ENCODE measurements at regions of chr19 and their contacts with region 1.

Region 1: GRCh38 chr19:14277608-14278007 is 71.6 kb upstream of the ADGRL1 start:
- DNase-seq: no peak
- ATAC-seq: no peak
- H3K4me3 ChIP-seq: no peak overlapping the region
- H3K4me3 Mint-ChIP-seq: no peak overlapping the region
- H3K27ac ChIP-seq: no peak overlapping the region
- H3K27ac Mint-ChIP-seq: no peak overlapping the region
- H3K4me1 ChIP-seq: peaks cover 8% of the 10 kb centered on the region
- H3K4me1 Mint-ChIP-seq: peaks cover 15% of the 10 kb centered on the region
- H3K27me3 ChIP-seq: no peaks in the 10 kb centered on the region
- H3K27me3 Mint-ChIP-seq: no peaks in the 10 kb centered on the region
- CTCF ChIP-seq: no peak

Region 2: DNA sequence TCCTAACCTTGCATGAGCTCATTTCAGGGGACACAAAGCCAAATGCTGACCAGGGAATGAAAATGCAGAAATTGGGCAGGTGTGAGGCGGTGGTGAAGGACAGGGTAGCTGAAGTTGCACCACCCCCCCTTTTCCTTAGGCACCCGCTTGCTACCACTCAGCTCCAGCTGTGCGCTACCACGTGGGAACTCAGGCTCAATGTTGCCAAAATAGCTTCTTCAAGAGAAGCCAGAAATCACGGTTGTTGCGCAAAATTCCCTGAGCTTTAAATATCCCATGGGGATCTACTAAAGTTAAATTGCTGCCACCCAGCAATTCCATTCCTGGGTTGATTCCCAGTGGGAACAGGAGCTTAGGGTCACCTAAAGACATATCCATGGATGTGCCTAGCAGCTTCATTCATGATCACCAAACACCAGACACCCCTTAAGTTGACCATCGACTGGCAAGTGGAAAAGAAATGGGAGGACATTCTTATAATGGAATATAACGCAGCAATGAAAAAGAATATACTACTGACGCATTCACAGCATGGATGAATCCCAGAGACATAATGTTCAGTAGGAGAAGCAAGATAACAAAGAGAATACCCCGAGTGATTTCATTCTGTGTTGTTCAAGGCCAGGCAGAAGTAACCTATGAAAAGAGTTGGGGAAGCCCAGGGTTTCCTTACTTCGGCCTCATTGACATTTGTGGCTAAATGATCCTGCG is 58.8 kb before region 1 on chr19:
- CTCF ChIA-PET with region 1: no interaction called
- POLR2A ChIA-PET with region 1: no interaction called
- intact Hi-C with region 1: loop called in 1 of 2 experiments (anchors 10 kb)
- DNase-seq: no peak
- ATAC-seq: no peak
- H3K4me3 ChIP-seq: no peak overlapping the region
- H3K4me3 Mint-ChIP-seq: no peak overlapping the region
- H3K27ac ChIP-seq: no peak overlapping the region
- H3K27ac Mint-ChIP-seq: no peak overlapping the region
- H3K4me1 ChIP-seq: peaks cover 5% of the 10 kb centered on the region
- H3K4me1 Mint-ChIP-seq: peaks cover 13% of the 10 kb centered on the region
- H3K27me3 ChIP-seq: no peaks in the 10 kb centered on the region
- H3K27me3 Mint-ChIP-seq: no peaks in the 10 kb centered on the region
- CTCF ChIP-seq: no peak

Measured in CD8-positive, alpha-beta T cell (primary cell).